HEK293 (cell line): ENCODE measurements at regions of chr9 and their contacts with region 1.

Region 1: GRCh38 chr9:33623658-33624586 is 99.9 kb downstream of the ANKRD18B start:
- H3K4me3 ChIP-seq: no peak overlapping the region
- H3K27ac ChIP-seq: no peak overlapping the region
- H3K4me1 ChIP-seq: no peaks in the 10 kb centered on the region; the same call in 1 of the 2 replicates
- CTCF ChIP-seq: peak; percentile 80

Region 2: DNA sequence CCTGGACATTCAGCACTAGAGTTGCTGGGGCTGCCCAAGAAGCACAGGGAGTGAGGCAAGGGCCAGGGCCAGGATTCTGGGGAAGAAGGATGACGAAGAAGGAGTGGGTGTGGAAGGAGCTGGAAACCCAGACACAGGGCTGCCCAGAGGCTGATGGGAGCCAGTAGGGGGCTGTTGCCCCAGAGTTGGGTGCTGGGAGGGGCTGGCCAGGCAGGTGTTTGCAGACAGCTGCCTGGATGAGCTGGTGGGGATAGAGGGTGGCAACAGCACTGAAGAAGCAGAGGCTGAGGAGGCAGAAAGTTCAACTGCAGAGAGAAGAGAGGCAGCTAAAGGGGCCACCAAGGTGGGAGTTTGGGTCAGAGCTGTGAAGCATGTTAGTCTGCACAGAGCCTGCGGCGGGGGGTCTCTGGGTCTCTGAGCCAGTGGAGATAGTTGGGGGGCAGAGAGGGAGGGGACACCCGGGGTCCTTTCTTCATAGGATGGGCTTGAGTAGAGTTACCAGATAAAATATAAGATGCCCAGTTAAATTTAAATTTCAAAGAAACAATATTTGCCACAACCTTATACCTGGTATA is 219.0 kb before region 1 on chr9:
- CTCF ChIA-PET with region 1: interaction called, 10 read pairs
- POLR2A ChIA-PET with region 1: no interaction called
- H3K4me3 ChIP-seq: no peak overlapping the region
- H3K27ac ChIP-seq: no peak overlapping the region
- H3K4me1 ChIP-seq: no peaks in the 10 kb centered on the region
- CTCF ChIP-seq: no peak

Region 3: DNA sequence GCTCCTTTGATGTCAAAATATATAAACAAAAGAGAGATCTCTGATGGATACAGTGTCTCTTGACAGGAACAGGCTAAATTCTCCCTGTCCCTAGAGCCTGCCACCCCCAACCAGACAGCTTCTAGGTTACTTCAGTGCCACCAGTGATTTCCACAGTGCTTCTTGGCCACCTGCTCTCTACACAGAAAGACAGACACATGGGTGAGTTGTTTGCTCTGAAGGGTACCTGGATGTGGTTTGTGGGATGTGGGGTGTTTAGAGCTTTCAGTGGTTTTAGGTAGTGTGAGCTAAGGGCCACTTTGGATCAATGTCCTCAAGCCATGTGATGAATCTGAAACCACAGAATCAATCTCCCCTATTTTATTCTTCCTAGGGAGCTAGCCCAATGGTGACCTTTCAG is 25.5 kb after region 1 on chr9:
- CTCF ChIA-PET with region 1: interaction called, 10 read pairs
- POLR2A ChIA-PET with region 1: interaction called, 3 read pairs
- H3K4me3 ChIP-seq: no peak overlapping the region
- H3K27ac ChIP-seq: no peak overlapping the region
- H3K4me1 ChIP-seq: no peaks in the 10 kb centered on the region
- CTCF ChIP-seq: no peak

Region 4: GRCh38 chr9:33731142-33731541 is 107.2 kb after region 1 on chr9:
- CTCF ChIA-PET with region 1: interaction called, 581 read pairs
- POLR2A ChIA-PET with region 1: no interaction called
- H3K4me3 ChIP-seq: no peak overlapping the region
- H3K27ac ChIP-seq: no peak overlapping the region
- H3K4me1 ChIP-seq: no peaks in the 10 kb centered on the region
- CTCF ChIP-seq: no peak

Region 5: DNA sequence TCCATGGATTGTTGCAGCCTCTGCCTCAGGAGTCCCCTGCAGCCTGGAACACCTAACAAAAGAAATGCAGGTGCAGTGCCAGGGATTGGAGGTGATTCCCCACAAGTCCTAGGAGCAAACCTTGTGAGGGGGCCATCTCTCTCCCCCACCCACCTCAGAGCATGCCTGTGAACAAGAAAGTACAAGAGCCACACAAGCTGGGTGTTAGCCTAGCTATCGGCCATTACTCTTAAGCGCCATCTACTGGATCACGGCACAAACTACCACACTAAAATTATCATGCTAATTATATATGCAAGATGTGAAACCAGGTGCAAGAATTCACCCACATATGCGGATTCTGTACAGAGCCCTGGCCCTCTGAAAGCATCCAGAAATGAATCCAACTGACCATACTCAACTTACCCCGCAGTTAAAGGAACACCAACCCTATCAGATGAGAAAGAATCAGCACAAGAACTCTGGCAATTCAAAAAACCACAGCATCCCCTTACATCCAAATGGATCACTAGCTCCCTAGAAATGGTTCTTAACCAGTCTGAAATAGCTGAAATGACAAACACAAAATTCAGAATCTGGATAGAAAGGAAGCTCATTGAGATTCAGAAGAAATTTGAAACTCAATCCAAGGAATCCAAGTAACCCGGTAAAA is 154.9 kb after region 1 on chr9:
- CTCF ChIA-PET with region 1: interaction called, 14 read pairs
- POLR2A ChIA-PET with region 1: no interaction called
- H3K4me3 ChIP-seq: no peak overlapping the region
- H3K27ac ChIP-seq: no peak overlapping the region
- H3K4me1 ChIP-seq: no peaks in the 10 kb centered on the region
- CTCF ChIP-seq: no peak